A673 (cell line): ENCODE measurements at regions of chr4 and their contacts with region 1.

Region 1: GRCh38 chr4:85968945-85969819 is 390.7 kb downstream of the MAPK10 start:
- DNase-seq: peak; percentile 56
- H3K4me3 ChIP-seq: no peak overlapping the region
- H3K27ac ChIP-seq: no peak overlapping the region
- H3K4me1 ChIP-seq: peaks cover 5% of the 10 kb centered on the region
- H3K27me3 ChIP-seq: no peaks in the 10 kb centered on the region
- CTCF ChIP-seq: peak; percentile 52

Region 2: DNA sequence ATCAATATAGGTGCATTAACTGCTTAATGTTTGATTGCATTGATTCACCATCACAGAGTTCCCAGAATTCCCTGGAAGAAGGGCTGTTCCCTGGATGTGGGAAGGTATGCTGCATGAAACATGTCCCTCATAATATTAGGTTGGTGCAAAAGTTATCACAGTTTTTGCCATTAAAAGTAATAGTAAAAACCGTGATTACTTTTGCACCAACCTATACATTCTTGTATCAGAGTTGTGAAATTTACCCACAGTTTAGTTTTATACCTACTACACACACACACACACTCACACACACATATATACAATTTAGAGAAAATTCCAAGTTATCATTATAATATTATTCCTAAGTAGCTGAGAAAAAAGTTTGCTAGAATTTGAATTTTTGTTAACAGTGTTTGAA is 173.2 kb before region 1 on chr4:
- CTCF ChIA-PET with region 1: interaction called, 16 read pairs
- POLR2A ChIA-PET with region 1: no interaction called
- intact Hi-C with region 1: loop called (anchors 2 kb)
- DNase-seq: no peak
- H3K4me3 ChIP-seq: no peak overlapping the region
- H3K27ac ChIP-seq: no peak overlapping the region
- H3K4me1 ChIP-seq: no peaks in the 10 kb centered on the region
- H3K27me3 ChIP-seq: no peaks in the 10 kb centered on the region
- CTCF ChIP-seq: no peak

Region 3: DNA sequence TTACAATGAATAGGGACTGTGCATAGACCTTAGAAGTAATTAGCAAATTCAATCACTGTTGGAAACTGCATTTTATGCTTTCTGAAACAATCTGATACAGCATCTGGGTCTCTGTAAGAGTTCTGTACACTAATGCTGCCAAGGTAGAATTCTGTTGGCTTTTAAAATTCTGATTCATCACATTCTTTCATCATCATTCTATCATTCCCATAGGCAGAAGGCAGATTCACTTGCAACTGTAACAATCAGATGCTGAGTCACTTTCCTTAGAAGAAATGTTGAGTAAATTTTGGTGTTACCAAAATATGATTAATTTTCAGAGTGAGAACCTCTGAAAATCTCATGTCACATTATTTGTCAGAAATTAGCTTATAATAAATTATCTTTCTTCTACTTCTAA is 123.5 kb after region 1 on chr4:
- CTCF ChIA-PET with region 1: no interaction called
- POLR2A ChIA-PET with region 1: no interaction called
- intact Hi-C with region 1: no loop called
- DNase-seq: peak; percentile 1
- H3K4me3 ChIP-seq: no peak overlapping the region
- H3K27ac ChIP-seq: no peak overlapping the region
- H3K4me1 ChIP-seq: no peaks in the 10 kb centered on the region
- H3K27me3 ChIP-seq: no peaks in the 10 kb centered on the region
- CTCF ChIP-seq: no peak

Region 4: GRCh38 chr4:86108137-86108536 is 139.0 kb after region 1 on chr4:
- CTCF ChIA-PET with region 1: no interaction called
- POLR2A ChIA-PET with region 1: no interaction called
- intact Hi-C with region 1: no loop called
- DNase-seq: no peak
- H3K4me3 ChIP-seq: no peak overlapping the region
- H3K27ac ChIP-seq: no peak overlapping the region
- H3K4me1 ChIP-seq: no peaks in the 10 kb centered on the region
- H3K27me3 ChIP-seq: no peaks in the 10 kb centered on the region
- CTCF ChIP-seq: no peak

Region 5: DNA sequence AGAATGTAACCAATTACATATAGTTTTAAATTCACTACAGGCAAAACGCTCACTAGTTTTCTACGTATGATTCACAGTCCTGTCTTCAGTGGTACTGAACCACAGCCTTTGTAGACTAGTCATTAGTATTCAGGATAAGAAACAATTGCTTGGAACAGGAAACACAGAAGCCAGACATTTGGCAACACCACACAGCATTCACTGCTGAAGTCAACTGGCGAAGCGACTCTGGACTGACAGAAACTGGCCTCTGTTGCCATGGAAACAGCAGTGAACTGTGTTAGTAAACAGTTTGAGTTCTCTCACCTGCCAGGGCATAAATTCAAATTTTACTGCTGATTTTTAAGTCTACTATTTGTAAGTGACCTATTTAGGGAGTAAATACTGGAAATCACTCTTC is 333.1 kb after region 1 on chr4:
- CTCF ChIA-PET with region 1: no interaction called
- POLR2A ChIA-PET with region 1: no interaction called
- intact Hi-C with region 1: no loop called
- DNase-seq: peak; percentile 17
- H3K4me3 ChIP-seq: no peak overlapping the region
- H3K27ac ChIP-seq: no peak overlapping the region
- H3K4me1 ChIP-seq: no peaks in the 10 kb centered on the region
- H3K27me3 ChIP-seq: no peaks in the 10 kb centered on the region
- CTCF ChIP-seq: no peak